ENCODE measurements at regions of chr5 and their contacts with region 1.

Region 1: GRCh38 chr5:127296321-127296720 is 5.7 kb downstream of the MEGF10 start:
- DNase-seq: no peak
- ATAC-seq: peak; percentile 60 to 90
- H3K4me3 ChIP-seq: no peak overlapping the region
- H3K27ac ChIP-seq: no peak overlapping the region
- H3K4me1 ChIP-seq: peaks cover 0 to 2% of the 10 kb centered on the region in 2 donors
- H3K27me3 ChIP-seq: no peaks in the 10 kb centered on the region
- CTCF ChIP-seq: no peak
- POLR2A ChIP-seq: no peak

Region 2: DNA sequence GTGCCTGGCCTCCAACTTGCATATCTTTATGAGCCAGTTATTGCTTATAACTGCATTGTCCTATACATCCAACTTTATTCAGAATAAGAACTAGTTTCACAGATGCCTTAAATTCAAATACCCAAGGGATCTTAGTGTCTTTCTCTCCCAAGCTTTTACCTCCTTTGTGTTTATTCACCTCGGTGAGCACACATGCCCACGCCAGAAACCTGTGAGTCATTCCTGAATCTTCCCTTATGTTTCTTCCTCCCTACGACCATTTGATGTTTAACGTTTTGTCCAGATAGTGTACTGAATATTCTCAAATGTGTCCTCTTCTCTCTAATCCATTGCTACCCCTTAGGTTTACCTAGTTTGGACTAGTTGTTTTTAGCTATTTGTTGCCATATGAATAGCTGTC is 61.2 kb before region 1 on chr5:
- in situ Hi-C with region 1: no loop called
- intact Hi-C with region 1: no loop called
- DNase-seq: no peak
- ATAC-seq: no peak
- H3K4me3 ChIP-seq: no peak overlapping the region
- H3K27ac ChIP-seq: no peak overlapping the region
- H3K4me1 ChIP-seq: no peaks in the 10 kb centered on the region
- H3K27me3 ChIP-seq: no peaks in the 10 kb centered on the region
- CTCF ChIP-seq: no peak
- POLR2A ChIP-seq: no peak

Region 3: DNA sequence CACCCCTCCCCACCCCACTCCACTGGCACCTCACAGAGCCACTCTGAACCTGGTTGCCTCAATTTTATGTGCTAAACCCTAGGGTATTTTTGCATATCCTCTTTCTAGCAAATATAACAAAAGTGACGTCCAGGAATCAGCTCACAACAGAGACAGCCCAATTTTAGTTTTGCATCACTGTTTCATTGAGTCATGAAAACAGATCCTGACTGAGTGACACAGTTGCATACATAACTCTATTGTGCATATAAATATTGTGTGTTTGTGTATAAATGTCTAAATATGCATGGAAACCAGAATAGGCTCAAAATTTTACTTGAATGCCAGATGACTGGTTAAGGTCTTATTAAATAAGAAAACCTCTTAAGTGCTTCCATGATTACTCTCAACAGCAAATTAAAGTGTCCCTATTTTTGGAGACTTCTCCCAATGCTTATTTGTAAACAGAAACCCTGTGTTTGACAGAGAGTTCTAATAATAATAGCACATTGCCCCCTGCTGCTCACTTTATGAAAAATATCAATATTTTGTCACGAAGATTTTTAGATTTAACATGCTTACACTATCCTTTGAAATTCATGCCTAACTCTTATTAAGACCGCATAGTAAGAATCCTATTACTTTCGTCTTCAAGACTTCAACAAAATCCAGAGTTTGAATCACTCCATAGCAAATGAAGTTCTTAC is 145.6 kb after region 1 on chr5:
- in situ Hi-C with region 1: loop called (anchors 5 to 10 kb)
- intact Hi-C with region 1: no loop called
- DNase-seq: no peak
- ATAC-seq: peak in 1 of 2 donors; percentile 46
- H3K4me3 ChIP-seq: no peak overlapping the region
- H3K27ac ChIP-seq: no peak overlapping the region
- H3K4me1 ChIP-seq: peaks cover 3 to 7% of the 10 kb centered on the region in 2 donors
- H3K27me3 ChIP-seq: no peaks in the 10 kb centered on the region
- CTCF ChIP-seq: peak in 4 of 5 experiments; percentile 29 to 32 (median 30)
- POLR2A ChIP-seq: no peak